ENCODE measurements at regions of chr2 and their contacts with region 1.

Region 1: DNA sequence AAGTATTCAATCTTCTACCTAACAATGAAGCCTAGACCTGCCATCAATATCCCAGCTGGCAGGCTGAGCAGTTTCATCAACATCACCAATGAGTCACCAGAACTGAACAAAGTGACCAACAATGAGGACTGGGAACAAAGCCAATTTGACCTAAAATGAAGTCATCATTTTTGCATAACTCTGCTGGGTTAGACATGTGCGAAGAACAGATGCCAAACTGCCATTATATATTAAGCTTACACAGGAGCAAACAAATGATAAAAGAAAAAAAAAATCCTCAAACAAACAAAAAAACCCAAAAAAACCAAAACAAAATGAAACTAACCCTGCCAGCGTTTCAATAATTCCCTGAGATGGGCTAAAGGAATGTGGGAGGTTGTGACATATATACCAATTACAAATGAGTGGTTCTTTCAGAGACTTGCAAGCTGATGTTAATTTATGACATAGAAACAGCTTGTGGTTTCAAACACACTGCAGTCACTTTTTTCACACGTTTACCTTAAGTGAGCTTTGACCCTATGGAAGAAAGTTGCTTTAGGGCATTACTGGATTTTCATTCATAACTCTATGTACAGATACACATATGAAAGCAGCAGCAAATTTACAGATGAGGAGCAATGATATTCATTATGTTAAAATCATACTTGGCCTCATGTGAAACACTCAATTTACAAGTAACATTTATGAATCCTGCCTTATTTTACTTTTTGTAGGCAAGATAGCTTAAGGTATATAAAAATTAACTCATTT is 56.9 kb upstream of the CCDC141 start:
- DNase-seq: peak; percentile 3
- H3K4me3 ChIP-seq: no peak overlapping the region
- H3K27ac ChIP-seq: peak overlapping the region in 1 of 2 experiments; percentile 54
- H3K4me1 ChIP-seq: peaks cover 4 to 18% of the 10 kb centered on the region in 2 experiments; a peak in 3 of 4 replicates
- H3K27me3 ChIP-seq: no peaks in the 10 kb centered on the region
- CTCF ChIP-seq: no peak
- EP300 ChIP-seq: peak; percentile 24 to 74; a peak in 3 of 4 replicates
- RAD21 ChIP-seq: no peak

Region 2: DNA sequence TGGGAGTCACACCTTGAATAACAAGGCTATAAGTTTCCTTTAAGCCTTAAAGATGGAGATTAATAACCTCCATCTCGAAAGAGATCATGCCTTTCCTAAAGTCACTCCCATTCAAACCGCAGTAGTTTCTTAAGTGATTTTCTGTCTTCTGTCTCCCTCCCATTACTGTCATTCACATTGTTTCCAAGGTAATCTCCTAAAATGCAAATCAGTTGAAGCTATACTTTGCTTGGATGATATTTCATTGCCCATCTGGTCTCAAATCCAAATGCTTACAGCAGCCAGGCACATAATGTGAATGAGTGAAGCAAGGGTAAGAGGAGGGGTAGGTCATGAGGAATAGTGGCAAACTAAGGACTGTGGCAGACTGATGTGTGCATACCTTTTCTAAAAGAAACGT is 173.4 kb before region 1 on chr2:
- CTCF ChIA-PET with region 1: no interaction called
- POLR2A ChIA-PET with region 1: no interaction called
- DNase-seq: no peak
- H3K4me3 ChIP-seq: no peak overlapping the region
- H3K27ac ChIP-seq: no peak overlapping the region
- H3K4me1 ChIP-seq: no peaks in the 10 kb centered on the region
- H3K27me3 ChIP-seq: no peaks in the 10 kb centered on the region
- CTCF ChIP-seq: no peak
- EP300 ChIP-seq: no peak
- RAD21 ChIP-seq: no peak

Region 3: GRCh38 chr2:179031731-179032408 is 75.0 kb before region 1 on chr2:
- CTCF ChIA-PET with region 1: no interaction called
- POLR2A ChIA-PET with region 1: no interaction called
- DNase-seq: no peak
- H3K4me3 ChIP-seq: peak overlapping the region in 1 of 2 experiments; percentile 26; a peak in 1 of 4 replicates
- H3K27ac ChIP-seq: no peak overlapping the region
- H3K4me1 ChIP-seq: no peaks in the 10 kb centered on the region; a peak in 1 of 4 replicates
- H3K27me3 ChIP-seq: no peaks in the 10 kb centered on the region
- CTCF ChIP-seq: no peak
- EP300 ChIP-seq: no peak
- RAD21 ChIP-seq: no peak

Region 4: GRCh38 chr2:179129574-179130238 is 22.9 kb after region 1 on chr2:
- CTCF ChIA-PET with region 1: interaction called, 15 read pairs
- POLR2A ChIA-PET with region 1: no interaction called
- DNase-seq: peak; percentile 6
- H3K4me3 ChIP-seq: no peak overlapping the region
- H3K27ac ChIP-seq: no peak overlapping the region
- H3K4me1 ChIP-seq: peaks cover 0 to 4% of the 10 kb centered on the region in 2 experiments; a peak in 2 of 4 replicates
- H3K27me3 ChIP-seq: no peaks in the 10 kb centered on the region
- CTCF ChIP-seq: peak; percentile 75
- EP300 ChIP-seq: no peak
- RAD21 ChIP-seq: peak; percentile 71